Heart right ventricle (tissue), 16 donors: ENCODE measurements at regions of chr1 and their contacts with region 1.

Region 1: DNA sequence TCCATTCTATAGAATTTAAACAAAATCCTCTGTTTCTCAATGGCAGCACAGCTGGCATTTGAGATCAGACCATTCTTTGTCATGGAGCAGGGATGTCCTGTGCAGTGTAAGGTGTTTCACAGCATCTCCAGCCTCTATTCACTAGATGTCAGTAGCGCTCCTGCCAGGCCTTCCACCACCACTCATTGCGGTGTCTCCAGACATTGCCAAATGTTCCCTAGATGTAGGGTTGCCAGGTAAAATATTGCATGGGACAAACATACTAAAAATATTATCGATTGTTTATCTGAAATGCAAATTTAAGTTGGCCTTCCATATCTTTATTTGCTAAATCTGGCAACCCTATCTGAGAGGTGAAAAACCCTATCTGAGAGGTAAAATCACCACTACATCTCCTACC is 11.7 kb downstream of the ITLN2 start:
- DNase-seq: no peak
- ATAC-seq: no peak
- H3K4me3 ChIP-seq: no peak overlapping the region
- H3K27ac ChIP-seq: no peak overlapping the region
- H3K4me1 ChIP-seq: peaks cover 0 to 9% (median 0%) of the 10 kb centered on the region in 9 donors
- H3K27me3 ChIP-seq: peaks cover 0 to 49% (median 21%) of the 10 kb centered on the region in 7 donors
- CTCF ChIP-seq: no peak

Region 2: DNA sequence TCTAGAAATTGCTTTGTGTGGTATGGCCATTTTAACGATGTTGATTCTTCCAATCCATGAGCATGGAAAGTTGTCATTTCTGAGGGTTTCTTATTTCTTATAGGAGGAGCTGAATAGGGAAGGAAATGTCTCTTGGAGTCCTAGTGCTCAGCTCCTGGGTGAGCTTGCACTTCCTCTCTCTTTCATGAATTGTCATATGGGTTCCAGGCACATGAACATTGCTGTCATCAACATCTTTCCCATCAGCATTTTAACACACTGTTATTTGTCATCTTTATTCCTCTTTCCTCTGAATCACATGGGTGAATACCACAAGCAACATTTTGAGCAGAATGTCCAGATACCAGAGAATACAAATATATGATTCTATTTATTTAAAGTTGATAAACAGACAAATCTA is 443.3 kb before region 1 on chr1:
- intact Hi-C with region 1: loop called in 1 of 10 experiments (anchors 10 kb)
- DNase-seq: no peak
- ATAC-seq: peak in 6 of 8 donors; percentile 43 to 79 (median 67)
- H3K4me3 ChIP-seq: no peak overlapping the region
- H3K27ac ChIP-seq: peak overlapping the region in 1 of 10 donors; percentile 79
- H3K4me1 ChIP-seq: peaks cover 0 to 7% (median 0%) of the 10 kb centered on the region in 9 donors
- H3K27me3 ChIP-seq: peaks cover 0 to 8% (median 0%) of the 10 kb centered on the region in 7 donors
- CTCF ChIP-seq: no peak

Region 3: GRCh38 chr1:160777486-160778089 is 165.3 kb before region 1 on chr1:
- intact Hi-C with region 1: no loop called
- DNase-seq: no peak
- ATAC-seq: no peak
- H3K4me3 ChIP-seq: no peak overlapping the region
- H3K27ac ChIP-seq: no peak overlapping the region
- H3K4me1 ChIP-seq: peaks cover 0 to 2% (median 0%) of the 10 kb centered on the region in 9 donors
- H3K27me3 ChIP-seq: peaks cover 0 to 19% (median 11%) of the 10 kb centered on the region in 7 donors
- CTCF ChIP-seq: peak in 6 of 9 donors; percentile 13 to 54 (median 25)

Region 4: DNA sequence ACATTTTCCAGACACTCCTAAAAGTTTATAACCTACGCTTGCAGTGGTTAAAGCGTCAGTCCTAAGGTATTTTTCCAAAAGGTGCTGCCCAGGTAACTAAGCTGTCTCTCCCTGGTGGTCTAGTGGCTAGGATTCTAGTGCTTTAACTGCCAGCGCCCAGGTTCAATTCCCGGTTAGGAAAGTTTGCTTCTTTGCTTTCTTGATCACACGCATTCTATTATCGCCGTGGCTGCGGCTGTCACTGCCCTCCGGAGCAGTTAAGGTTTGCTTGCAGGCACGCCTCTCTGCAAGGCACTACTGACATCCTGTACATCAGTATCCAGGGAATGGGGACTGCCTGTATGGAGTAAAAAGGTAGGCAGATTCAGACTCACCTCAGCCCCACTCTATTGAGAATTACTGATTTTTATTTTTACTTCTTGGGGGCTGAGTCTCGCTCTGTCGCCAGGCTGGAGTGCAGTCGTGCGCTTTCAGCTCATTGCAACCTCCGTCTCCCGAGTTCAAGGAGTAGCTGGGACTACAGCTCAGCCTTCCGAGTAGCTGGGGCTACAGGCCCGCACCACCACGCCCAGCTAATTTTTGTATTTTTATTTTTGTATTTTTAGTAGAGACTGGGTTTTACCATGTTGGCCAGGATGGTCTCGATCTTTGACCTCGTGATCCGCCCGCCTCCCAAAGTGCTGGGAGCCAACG is 478.0 kb after region 1 on chr1:
- intact Hi-C with region 1: no loop called
- DNase-seq: no peak
- ATAC-seq: no peak
- H3K4me3 ChIP-seq: no peak overlapping the region
- H3K27ac ChIP-seq: no peak overlapping the region
- H3K4me1 ChIP-seq: no peaks in the 10 kb centered on the region
- H3K27me3 ChIP-seq: peaks cover 0 to 7% (median 0%) of the 10 kb centered on the region in 7 donors
- CTCF ChIP-seq: no peak